Endothelial cell of umbilical vein (primary cell): ENCODE measurements at regions of chr6 and their contacts with region 1.

Region 1: DNA sequence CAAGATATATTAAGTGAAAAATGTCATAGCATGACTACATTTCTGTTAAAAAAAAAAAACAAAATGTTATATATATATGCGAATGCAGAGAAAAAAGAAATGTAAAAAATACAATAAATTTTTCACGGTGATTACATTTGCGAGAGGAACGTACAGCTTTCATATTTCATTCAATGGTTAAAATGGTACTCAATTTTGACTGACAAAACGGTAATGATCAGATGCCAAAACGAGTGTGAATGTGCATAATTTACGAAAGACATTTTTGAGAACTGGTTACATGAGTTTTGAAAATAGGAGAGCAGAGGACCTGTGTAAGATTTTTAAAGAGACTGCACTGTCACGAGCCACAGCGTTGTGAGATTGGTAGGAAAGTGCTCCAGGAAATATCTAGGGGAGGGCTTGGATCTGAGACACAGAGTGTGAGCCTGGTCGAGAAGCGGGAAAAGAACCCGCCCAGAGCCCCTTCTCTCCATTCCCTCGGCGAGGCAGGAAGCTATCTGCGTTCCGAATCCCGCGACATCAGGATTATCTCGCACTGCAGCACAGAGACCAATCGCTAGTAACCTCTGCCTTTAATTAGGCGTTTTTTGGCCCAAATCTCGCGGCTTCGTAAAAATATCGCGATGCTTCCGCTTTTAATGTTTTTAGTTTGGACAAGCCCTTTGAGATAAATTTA is 28.5 kb downstream of the TRIM27 start:
- DNase-seq: peak; percentile 98
- H3K4me3 ChIP-seq: peak overlapping the region; percentile 22 to 82 (median 68)
- H3K27ac ChIP-seq: peak overlapping the region; percentile 88
- H3K4me1 ChIP-seq: peaks cover 6% of the 10 kb centered on the region
- H3K27me3 ChIP-seq: no peaks in the 10 kb centered on the region
- CTCF ChIP-seq: no peak
- POLR2A ChIP-seq: peak; percentile 92

Region 2: DNA sequence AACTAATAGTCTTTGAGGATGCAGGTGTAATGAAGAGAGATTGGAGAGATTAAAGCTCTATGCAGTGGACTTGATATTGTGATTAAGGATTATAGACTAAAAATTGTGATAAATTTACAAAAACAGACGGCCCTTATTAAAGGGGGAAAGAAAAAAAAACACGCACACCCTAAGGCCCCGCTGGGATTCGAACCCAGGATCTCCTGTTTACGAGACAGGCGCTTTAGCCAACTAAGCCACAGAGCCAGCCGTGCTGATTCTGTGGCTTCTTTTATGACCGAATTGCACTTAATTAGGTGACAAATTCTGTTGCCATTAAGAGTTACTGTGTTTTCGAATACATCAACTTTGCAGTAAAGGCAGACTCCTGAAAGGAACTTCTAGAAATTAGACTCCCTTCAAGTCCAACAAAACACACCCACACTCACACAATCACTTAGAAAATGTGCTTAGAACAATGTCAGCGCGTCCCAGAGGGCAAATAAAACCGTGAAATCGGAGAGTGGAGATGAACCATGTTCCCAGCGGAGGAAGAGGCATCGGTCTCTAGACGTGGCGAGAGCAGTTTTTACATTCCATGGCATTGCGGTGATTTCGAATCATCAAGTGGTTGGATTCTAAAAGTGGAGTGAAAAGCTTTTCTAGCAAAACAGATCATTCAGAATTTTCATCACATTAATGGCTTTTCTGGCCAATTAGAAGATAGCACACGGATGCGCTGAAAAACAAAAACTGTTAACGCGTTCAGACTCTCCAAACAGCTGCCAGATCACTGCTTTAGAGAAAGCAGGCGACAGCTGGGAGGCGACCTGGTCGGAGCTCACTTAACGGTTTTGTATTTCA is 247.0 kb before region 1 on chr6:
- CTCF ChIA-PET with region 1: no interaction called
- POLR2A ChIA-PET with region 1: no interaction called
- dilution Hi-C with region 1: no loop called
- intact Hi-C with region 1: loop called (anchors 2 kb)
- DNase-seq: peak; percentile 86
- H3K4me3 ChIP-seq: peak overlapping the region; percentile 47 to 97 (median 70)
- H3K27ac ChIP-seq: peak overlapping the region; percentile 14
- H3K4me1 ChIP-seq: peaks cover 3% of the 10 kb centered on the region
- H3K27me3 ChIP-seq: peaks cover 7 to 20% of the 10 kb centered on the region in 2 experiments
- CTCF ChIP-seq: no peak
- POLR2A ChIP-seq: no peak

Region 3: GRCh38 chr6:28725890-28726348 is 169.4 kb before region 1 on chr6:
- CTCF ChIA-PET with region 1: no interaction called
- POLR2A ChIA-PET with region 1: no interaction called
- dilution Hi-C with region 1: no loop called
- intact Hi-C with region 1: loop called (anchors 2 kb)
- DNase-seq: no peak
- H3K4me3 ChIP-seq: no peak overlapping the region
- H3K27ac ChIP-seq: no peak overlapping the region
- H3K4me1 ChIP-seq: peaks cover 4% of the 10 kb centered on the region
- H3K27me3 ChIP-seq: peaks cover 9 to 12% of the 10 kb centered on the region in 2 experiments
- CTCF ChIP-seq: no peak
- POLR2A ChIP-seq: no peak

Region 4: DNA sequence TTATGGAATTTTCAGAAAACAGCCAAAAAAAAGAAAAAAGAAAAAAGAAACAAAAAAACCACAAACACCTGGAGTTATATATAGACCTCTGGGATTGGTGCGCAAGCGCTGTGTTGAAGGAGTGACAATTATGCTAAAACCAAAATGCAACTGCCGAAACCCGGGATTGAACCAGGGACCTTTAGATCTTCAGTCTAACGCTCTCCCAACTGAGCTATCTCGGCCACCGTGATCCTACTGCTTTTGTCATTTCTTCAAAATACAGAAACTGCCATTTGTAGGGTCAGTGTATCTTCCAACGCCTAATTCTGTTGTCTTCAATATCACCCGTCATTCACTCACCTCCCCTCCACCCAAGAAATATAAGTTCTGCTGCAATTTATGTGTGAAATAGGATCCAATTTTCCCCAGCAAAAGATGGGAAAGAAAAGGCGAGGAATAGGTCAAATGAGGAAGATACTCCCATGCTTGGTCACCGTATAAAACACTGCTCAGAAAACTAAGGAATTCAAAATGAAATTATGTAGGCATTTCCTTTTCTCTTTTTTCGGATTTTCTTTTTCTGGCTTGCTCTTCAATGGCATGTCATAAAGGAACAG is 87.5 kb before region 1 on chr6:
- CTCF ChIA-PET with region 1: no interaction called
- POLR2A ChIA-PET with region 1: no interaction called
- dilution Hi-C with region 1: no loop called
- intact Hi-C with region 1: no loop called
- DNase-seq: peak; percentile 53
- H3K4me3 ChIP-seq: peak overlapping the region in 2 of 3 experiments; percentile 30 to 36
- H3K27ac ChIP-seq: no peak overlapping the region
- H3K4me1 ChIP-seq: peaks cover 4% of the 10 kb centered on the region
- H3K27me3 ChIP-seq: peaks cover 39 to 50% of the 10 kb centered on the region in 2 experiments
- CTCF ChIP-seq: no peak
- POLR2A ChIP-seq: no peak

Region 5: GRCh38 chr6:28863604-28864320 is 31.5 kb before region 1 on chr6:
- CTCF ChIA-PET with region 1: interaction called, 3 read pairs
- POLR2A ChIA-PET with region 1: interaction called, 7 read pairs
- dilution Hi-C with region 1: no loop called
- intact Hi-C with region 1: loop called (anchors 1 kb)
- DNase-seq: peak; percentile 91
- H3K4me3 ChIP-seq: peak overlapping the region; percentile 64 to 91 (median 83)
- H3K27ac ChIP-seq: peak overlapping the region; percentile 9
- H3K4me1 ChIP-seq: peaks cover 16% of the 10 kb centered on the region
- H3K27me3 ChIP-seq: peaks cover 5% of the 10 kb centered on the region in 2 experiments
- CTCF ChIP-seq: no peak
- POLR2A ChIP-seq: no peak

Region 6: GRCh38 chr6:28880894-28881780 is 14.1 kb before region 1 on chr6:
- CTCF ChIA-PET with region 1: interaction called, 3 read pairs
- POLR2A ChIA-PET with region 1: interaction called, 7 read pairs
- dilution Hi-C with region 1: no loop called
- intact Hi-C with region 1: loop called (anchors 1 kb)
- DNase-seq: peak; percentile 84
- H3K4me3 ChIP-seq: peak overlapping the region; percentile 69 to 97 (median 86)
- H3K27ac ChIP-seq: no peak overlapping the region
- H3K4me1 ChIP-seq: peaks cover 2% of the 10 kb centered on the region
- H3K27me3 ChIP-seq: peaks cover 23 to 27% of the 10 kb centered on the region in 2 experiments
- CTCF ChIP-seq: no peak
- POLR2A ChIP-seq: no peak

Region 7: DNA sequence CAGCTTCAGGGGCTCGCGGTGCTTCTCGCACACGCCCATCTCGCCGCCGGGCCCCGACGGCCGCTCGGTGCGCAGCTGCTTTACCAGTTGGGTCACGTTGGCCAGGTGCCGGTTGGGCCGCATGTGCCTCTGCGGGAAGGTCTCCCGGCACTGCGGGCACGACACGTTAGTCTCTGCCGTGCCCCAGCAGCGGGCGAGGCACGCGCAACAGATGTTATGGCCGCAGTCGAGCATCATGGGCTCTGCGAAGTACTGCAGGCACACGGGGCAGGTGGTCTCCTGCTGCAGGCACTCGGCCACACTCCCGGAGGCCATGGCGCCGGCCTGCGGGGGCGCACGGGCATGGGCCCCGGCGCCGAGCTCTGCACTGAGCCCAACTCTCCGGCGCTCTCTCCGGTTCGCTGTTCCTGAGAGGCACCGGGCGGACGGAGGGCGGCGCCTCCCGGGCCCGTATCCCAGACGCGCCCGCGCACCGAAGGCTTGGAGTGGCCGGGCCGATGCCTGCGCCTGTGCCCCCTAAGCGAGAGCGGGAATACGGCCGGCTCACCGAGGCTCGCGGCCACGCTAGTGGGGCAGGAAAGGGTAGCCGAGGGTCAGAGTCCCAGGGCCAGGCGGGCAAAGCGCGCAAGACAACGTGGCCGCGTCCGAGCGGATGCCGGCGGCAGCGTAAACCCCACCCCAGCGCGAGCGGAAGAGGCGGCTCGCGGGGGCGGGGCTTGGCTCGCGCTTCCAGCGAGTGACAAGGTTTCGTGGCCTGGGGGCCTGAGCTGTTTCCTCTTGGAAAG is 28.2 kb after region 1 on chr6 and contains the start of gene TRIM27:
- CTCF ChIA-PET with region 1: interaction called, 4 read pairs
- POLR2A ChIA-PET with region 1: interaction called, 6 read pairs
- dilution Hi-C with region 1: no loop called
- intact Hi-C with region 1: loop called (anchors 1 kb)
- DNase-seq: peak; percentile 85
- H3K4me3 ChIP-seq: peak within 1 kb of the TSS; percentile 55 to 90 (median 63)
- H3K27ac ChIP-seq: peak within 1 kb of the TSS; percentile 77
- H3K4me1 ChIP-seq: peaks cover 18% of the 10 kb centered on the region
- H3K27me3 ChIP-seq: no peaks in the 10 kb centered on the region
- CTCF ChIP-seq: no peak
- POLR2A ChIP-seq: peak; percentile 95
- total RNA-seq, gene TRIM27: 67.5 and 69.2 TPM in 2 replicates

Region 8: DNA sequence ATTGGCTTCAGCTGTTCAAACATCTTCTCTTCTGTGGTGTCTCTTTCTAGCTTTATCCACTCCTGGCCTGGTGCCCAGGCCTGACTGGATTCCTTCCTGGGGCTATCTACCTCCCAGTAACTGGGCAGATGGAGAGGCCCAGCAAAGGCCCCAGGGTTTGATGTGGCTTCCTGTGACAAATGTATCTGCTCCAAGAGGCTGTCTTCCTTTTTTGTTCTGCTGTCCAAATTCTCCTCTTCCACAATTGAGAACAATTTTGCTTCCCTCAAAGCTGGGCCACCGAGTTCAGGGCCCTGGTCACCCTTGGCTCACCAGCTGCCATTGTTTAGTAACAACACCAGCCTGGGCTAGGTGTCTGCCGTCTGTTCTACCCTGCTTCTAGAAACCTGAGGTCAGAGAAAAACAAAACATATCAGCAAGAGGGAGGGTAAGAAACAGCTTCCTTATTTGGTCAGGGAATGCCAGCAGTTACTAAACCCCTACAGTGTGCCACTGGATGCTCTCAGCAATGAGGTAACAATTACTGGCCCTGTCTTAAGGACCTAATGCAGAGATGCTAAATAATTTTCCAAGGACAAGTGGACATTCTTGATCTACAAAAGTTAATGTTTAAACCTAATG is 781.8 kb after region 1 on chr6:
- CTCF ChIA-PET with region 1: no interaction called
- POLR2A ChIA-PET with region 1: no interaction called
- dilution Hi-C with region 1: no loop called
- intact Hi-C with region 1: no loop called
- DNase-seq: no peak
- H3K4me3 ChIP-seq: no peak overlapping the region
- H3K27ac ChIP-seq: no peak overlapping the region
- H3K4me1 ChIP-seq: no peaks in the 10 kb centered on the region
- H3K27me3 ChIP-seq: peaks cover 0 to 2% of the 10 kb centered on the region in 2 experiments
- CTCF ChIP-seq: no peak
- POLR2A ChIP-seq: no peak